Posterior vena cava (tissue), 2 donors: ENCODE measurements at regions of chr2 and their contacts with region 1.

Region 1: GRCh38 chr2:182186132-182186735 is 200.6 kb downstream of the PPP1R1C start:
- DNase-seq: no peak

Region 2: GRCh38 chr2:182207049-182207746 is 21.0 kb after region 1 on chr2:
- intact Hi-C with region 1: no loop called
- DNase-seq: no peak

Region 3: DNA sequence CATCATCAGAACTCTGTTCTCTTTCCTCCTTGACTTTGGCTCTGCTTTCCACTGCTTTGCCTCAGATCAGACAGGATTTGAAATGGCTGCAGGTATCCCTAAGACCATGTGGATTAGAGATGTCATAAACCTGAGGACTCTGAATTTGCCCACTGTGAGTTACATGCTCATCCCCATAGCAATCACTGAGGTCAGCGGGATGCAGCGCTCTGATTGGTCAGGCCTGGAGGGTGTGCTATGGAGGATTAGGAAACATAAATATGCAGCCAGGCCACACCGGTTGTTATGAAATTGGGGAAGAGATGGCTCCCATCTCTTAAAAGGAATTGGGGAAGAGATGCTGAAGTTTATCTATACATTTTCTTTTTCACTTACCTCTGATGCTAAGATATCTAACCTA is 456.1 kb after region 1 on chr2:
- intact Hi-C with region 1: loop called (anchors 5 to 10 kb)
- DNase-seq: peak; percentile 80

Region 4: GRCh38 chr2:182649316-182649715 is 463.1 kb after region 1 on chr2:
- intact Hi-C with region 1: loop called (anchors 5 to 10 kb)
- DNase-seq: no peak